OCI-LY7 (cell line): ENCODE measurements at regions of chr17 and their contacts with region 1.

Region 1: DNA sequence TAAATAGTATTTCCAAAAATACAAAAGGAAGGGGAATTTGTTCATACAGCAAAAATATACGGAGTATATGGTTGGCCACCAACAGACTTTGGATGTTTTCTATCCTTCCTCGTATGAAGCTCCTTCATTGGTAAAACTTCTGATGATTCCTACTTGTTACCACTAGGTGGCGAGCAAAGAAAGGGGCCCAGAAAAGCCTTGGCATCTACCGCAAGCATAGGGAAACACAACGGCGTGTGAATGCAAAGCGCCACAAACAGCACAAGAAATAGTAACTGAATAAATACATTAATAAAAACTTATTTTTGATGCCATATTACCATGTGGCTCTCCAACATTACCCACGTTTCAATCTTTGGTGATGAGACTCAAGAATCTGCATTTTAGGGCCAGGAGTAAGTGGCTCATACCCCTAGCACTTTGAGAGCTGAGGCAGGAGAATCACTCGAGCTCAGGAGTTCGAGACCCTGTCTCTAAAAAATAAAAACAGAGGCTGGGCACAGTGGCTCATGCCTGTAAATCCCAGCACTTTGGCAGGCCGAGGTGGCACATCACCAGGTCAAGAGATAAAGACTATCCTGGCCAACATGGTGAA is 34.5 kb downstream of the YWHAE start:
- DNase-seq: peak; percentile 81
- H3K4me3 ChIP-seq: no peak overlapping the region
- H3K27ac ChIP-seq: no peak overlapping the region
- H3K4me1 ChIP-seq: peaks cover 50% of the 10 kb centered on the region
- CTCF ChIP-seq: peak; percentile 97

Region 2: DNA sequence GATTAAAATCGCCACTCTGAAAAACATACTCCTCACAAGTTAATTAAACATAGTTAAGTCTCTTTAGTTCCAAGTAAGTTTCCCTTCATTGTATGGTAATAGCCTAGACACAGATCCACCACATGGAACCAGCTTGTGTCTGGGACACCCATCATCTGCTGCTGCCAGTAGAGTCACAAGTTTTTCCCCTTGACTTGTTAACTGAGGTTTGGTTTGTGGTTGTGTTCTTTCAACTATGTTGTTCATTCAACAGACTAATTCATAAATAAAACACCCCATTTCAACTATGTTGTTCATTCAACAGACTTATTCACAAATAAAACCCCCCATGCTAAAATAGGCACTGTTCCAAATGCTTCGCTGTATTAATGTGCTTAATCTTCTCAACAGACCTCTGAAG is 10.1 kb after region 1 on chr17:
- CTCF ChIA-PET with region 1: interaction called, 6 read pairs
- POLR2A ChIA-PET with region 1: interaction called, 12 read pairs
- intact Hi-C with region 1: no loop called
- DNase-seq: no peak
- H3K4me3 ChIP-seq: no peak overlapping the region
- H3K27ac ChIP-seq: peak overlapping the region; percentile 32
- H3K4me1 ChIP-seq: peaks cover 84% of the 10 kb centered on the region
- CTCF ChIP-seq: no peak

Region 3: DNA sequence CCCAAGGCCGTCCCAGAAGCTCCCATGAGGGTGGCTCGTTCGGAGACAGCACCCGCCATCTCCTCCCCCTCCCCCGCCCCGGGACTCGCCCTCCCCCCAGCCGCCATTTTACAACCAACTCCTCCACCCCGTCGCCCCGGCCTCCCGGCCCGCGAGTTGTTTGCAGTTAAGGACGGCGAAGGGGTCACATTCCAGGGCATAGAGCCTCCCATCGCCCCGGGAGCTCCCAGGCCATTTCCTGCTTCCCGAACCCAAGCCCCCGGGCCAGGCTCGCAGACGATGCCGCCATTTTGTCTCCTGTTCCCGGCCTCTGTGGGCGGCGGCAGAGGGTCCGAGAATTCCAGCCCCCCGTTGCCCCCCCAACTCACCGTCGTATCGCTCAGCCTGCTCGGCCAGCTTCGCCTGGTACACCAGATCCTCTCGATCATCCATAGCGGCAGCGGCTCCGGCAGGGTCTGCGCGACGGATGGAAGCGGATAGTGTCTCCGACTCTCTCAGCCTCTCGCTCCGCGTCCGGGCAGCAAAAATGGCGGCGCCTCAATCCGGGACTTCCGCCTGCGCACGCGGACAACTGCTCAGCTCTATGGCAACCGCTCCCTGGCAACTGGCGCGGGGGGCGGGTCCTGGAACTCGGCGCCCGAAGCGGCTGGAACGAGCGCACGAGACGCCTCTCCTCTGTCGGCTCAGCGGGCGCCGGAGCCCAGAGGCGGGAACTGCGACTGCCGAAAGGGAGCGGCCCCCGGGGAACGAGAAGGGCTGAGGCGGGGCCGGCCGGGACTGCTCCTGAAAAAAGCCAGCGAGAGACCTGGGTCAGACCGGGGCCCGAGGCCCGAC is 34.4 kb after region 1 on chr17 and contains the start of gene YWHAE:
- CTCF ChIA-PET with region 1: interaction called, 3 read pairs
- POLR2A ChIA-PET with region 1: interaction called, 4 read pairs
- intact Hi-C with region 1: loop called (anchors 1 kb)
- DNase-seq: peak; percentile 95
- H3K4me3 ChIP-seq: peak within 1 kb of the TSS; percentile 97
- H3K27ac ChIP-seq: peak within 1 kb of the TSS; percentile 72
- H3K4me1 ChIP-seq: peaks cover 26% of the 10 kb centered on the region
- CTCF ChIP-seq: no peak
- total RNA-seq, gene YWHAE: 267 and 467 TPM in 2 replicates

Region 4: GRCh38 chr17:1455797-1456599 is 90.5 kb after region 1 on chr17 and contains the start of gene CRK:
- CTCF ChIA-PET with region 1: no interaction called
- POLR2A ChIA-PET with region 1: no interaction called
- intact Hi-C with region 1: loop called (anchors 1 kb)
- DNase-seq: peak; percentile 98
- H3K4me3 ChIP-seq: peak within 1 kb of the TSS; percentile 99
- H3K27ac ChIP-seq: peak within 1 kb of the TSS; percentile 69
- H3K4me1 ChIP-seq: peaks cover 21% of the 10 kb centered on the region
- CTCF ChIP-seq: no peak
- total RNA-seq, gene CRK: 30.5 and 32.0 TPM in 2 replicates

Region 5: GRCh38 chr17:1484676-1485421 is 119.3 kb after region 1 on chr17:
- CTCF ChIA-PET with region 1: no interaction called
- POLR2A ChIA-PET with region 1: no interaction called
- intact Hi-C with region 1: loop called (anchors 1 kb)
- DNase-seq: peak; percentile 65
- H3K4me3 ChIP-seq: peak overlapping the region; percentile 73
- H3K27ac ChIP-seq: peak overlapping the region; percentile 45
- H3K4me1 ChIP-seq: peaks cover 43% of the 10 kb centered on the region
- CTCF ChIP-seq: no peak

Region 6: DNA sequence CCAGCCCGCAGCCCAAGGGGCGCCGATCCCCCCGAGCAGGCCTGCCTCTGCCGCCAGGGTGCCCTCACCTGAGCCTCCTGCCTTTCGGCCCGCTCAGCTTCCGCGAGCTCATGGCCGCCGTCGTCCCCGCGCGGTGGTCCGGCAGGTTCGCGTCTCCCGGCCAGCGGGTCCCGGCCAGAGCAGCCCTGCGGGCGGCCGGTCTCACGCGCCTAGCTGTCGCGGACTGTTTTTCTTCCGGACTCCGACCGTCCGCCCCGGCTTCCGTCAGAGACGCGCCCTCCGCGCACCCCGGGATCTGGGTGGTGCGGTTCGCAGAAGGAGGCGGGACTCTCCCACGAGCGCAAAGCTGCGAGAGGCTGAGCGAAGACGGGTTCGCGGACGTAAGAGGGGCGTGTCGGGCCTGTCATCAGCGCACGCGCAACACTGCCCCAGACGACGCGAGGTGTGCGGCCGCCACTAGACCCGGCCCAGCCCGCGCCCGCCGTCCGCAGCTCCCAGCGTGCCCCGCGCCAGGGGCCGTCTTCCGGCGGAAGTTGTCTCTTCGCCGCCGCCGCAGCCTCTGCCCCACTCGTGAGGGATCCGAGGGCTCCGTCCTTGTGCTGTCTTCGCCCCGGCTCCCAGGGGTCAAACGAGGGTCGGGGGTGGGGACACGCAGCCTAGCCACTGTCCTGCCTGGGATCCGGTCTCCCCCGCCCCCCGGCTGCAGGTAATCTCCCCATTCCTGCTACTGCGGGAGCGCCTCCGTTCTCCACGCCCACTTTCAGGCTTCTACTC is 151.0 kb after region 1 on chr17 and contains the start of gene INPP5K:
- CTCF ChIA-PET with region 1: interaction called, 10 read pairs
- POLR2A ChIA-PET with region 1: interaction called, 4 read pairs
- intact Hi-C with region 1: loop called (anchors 1 kb)
- DNase-seq: peak; percentile 99
- H3K4me3 ChIP-seq: peak within 1 kb of the TSS; percentile 88
- H3K27ac ChIP-seq: peak within 1 kb of the TSS; percentile 49
- H3K4me1 ChIP-seq: peaks cover 17% of the 10 kb centered on the region
- CTCF ChIP-seq: no peak
- total RNA-seq, gene INPP5K: 23.4 and 28.8 TPM in 2 replicates